Naive thymus-derived CD4-positive, alpha-beta T cell (primary cell): ENCODE measurements at regions of chr19 and their contacts with region 1.

Region 1: GRCh38 chr19:55632463-55632834 is 8.1 kb upstream of the ZNF784 start:
- DNase-seq: peak in 8 of 9 donors; percentile 81 to 93 (median 88)
- ATAC-seq: peak; percentile 76
- H3K4me3 ChIP-seq: no peak overlapping the region
- H3K4me3 Mint-ChIP-seq: peak overlapping the region; percentile 2 to 82 (median 34)
- H3K27ac ChIP-seq: peak overlapping the region; percentile 16
- H3K27ac Mint-ChIP-seq: peak overlapping the region; percentile 17 to 95 (median 71)
- H3K4me1 ChIP-seq: peaks cover 23 to 28% of the 10 kb centered on the region in 2 donors
- H3K4me1 Mint-ChIP-seq: peaks cover 39 to 54% (median 46%) of the 10 kb centered on the region in 7 donors
- H3K27me3 ChIP-seq: no peaks in the 10 kb centered on the region
- H3K27me3 Mint-ChIP-seq: peaks cover 0 to 12% (median 0%) of the 10 kb centered on the region in 5 donors

Region 2: DNA sequence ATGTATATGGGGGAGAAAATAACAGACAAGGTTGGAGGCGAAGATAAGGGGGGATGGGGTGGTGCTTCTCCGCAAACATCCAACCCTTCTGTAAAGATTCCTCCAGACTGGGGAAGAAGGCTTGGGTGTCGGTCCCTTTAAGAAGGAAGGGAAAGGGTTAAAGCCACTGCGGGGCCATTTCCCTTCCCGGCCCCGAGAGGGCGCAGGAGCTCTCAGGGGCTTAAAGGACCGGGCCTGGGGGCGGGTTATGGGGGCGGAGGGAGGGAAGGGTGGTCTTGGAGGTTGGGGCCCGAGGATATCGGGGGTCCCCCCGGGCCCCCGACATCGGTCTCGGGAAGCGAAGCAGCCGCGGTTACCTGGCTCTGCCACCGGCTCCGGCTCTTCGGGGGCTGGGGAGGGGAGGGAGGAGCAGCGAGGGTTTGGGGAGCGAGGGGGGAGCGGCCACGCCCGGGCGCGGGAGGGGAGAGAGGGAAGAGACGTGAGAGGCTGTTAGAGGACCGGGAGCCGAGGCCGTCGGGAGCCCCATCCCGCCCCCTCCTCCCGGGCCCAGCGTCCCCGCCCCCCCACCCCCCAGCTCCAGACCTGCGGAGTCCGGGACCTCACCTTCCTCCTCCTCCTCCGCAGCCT is 486.3 kb before region 1 on chr19:
- CTCF ChIA-PET with region 1: interaction called, 22 read pairs
- POLR2A ChIA-PET with region 1: no interaction called
- intact Hi-C with region 1: loop called in 1 of 2 experiments (anchors 1 kb)
- DNase-seq: no peak
- ATAC-seq: no peak
- H3K4me3 ChIP-seq: no peak overlapping the region
- H3K4me3 Mint-ChIP-seq: peak overlapping the region in 1 of 10 donors; percentile 28
- H3K27ac ChIP-seq: no peak overlapping the region
- H3K27ac Mint-ChIP-seq: no peak overlapping the region
- H3K4me1 ChIP-seq: no peaks in the 10 kb centered on the region
- H3K4me1 Mint-ChIP-seq: peaks cover under 1 to 14% (median 8%) of the 10 kb centered on the region in 7 donors
- H3K27me3 ChIP-seq: peaks cover 10 to 11% of the 10 kb centered on the region in 2 donors
- H3K27me3 Mint-ChIP-seq: peaks cover 49 to 65% (median 52%) of the 10 kb centered on the region in 5 donors

Region 3: GRCh38 chr19:55467236-55468053 is 165.0 kb before region 1 on chr19:
- CTCF ChIA-PET with region 1: interaction called, 10 read pairs
- POLR2A ChIA-PET with region 1: interaction called, 4 read pairs
- intact Hi-C with region 1: loop called in 1 of 2 experiments (anchors 1 kb)
- DNase-seq: peak in 7 of 9 donors; percentile 21 to 88 (median 54)
- ATAC-seq: peak; percentile 97
- H3K4me3 ChIP-seq: no peak overlapping the region
- H3K4me3 Mint-ChIP-seq: no peak overlapping the region
- H3K27ac ChIP-seq: no peak overlapping the region
- H3K27ac Mint-ChIP-seq: peak overlapping the region in 2 of 9 donors; percentile 25 to 59
- H3K4me1 ChIP-seq: no peaks in the 10 kb centered on the region
- H3K4me1 Mint-ChIP-seq: peaks cover under 1 to 9% (median 3%) of the 10 kb centered on the region in 7 donors
- H3K27me3 ChIP-seq: no peaks in the 10 kb centered on the region
- H3K27me3 Mint-ChIP-seq: peaks cover 0 to 3% (median 0%) of the 10 kb centered on the region in 5 donors

Region 4: GRCh38 chr19:55516878-55517620 is 115.4 kb before region 1 on chr19:
- CTCF ChIA-PET with region 1: interaction called, 74 read pairs
- POLR2A ChIA-PET with region 1: interaction called, 4 read pairs
- intact Hi-C with region 1: loop called (anchors 1 kb)
- DNase-seq: peak; percentile 77 to 94 (median 85)
- ATAC-seq: peak; percentile 100
- H3K4me3 ChIP-seq: peak overlapping the region; percentile 48
- H3K4me3 Mint-ChIP-seq: peak overlapping the region; percentile 74 to 89 (median 84)
- H3K27ac ChIP-seq: peak overlapping the region; percentile 66
- H3K27ac Mint-ChIP-seq: peak overlapping the region in 8 of 9 donors; percentile 55 to 96 (median 83)
- H3K4me1 ChIP-seq: peaks cover 3 to 4% of the 10 kb centered on the region in 2 donors
- H3K4me1 Mint-ChIP-seq: peaks cover 0 to 4% (median 4%) of the 10 kb centered on the region in 7 donors
- H3K27me3 ChIP-seq: no peaks in the 10 kb centered on the region
- H3K27me3 Mint-ChIP-seq: peaks cover 0 to 4% (median 3%) of the 10 kb centered on the region in 5 donors

Region 5: DNA sequence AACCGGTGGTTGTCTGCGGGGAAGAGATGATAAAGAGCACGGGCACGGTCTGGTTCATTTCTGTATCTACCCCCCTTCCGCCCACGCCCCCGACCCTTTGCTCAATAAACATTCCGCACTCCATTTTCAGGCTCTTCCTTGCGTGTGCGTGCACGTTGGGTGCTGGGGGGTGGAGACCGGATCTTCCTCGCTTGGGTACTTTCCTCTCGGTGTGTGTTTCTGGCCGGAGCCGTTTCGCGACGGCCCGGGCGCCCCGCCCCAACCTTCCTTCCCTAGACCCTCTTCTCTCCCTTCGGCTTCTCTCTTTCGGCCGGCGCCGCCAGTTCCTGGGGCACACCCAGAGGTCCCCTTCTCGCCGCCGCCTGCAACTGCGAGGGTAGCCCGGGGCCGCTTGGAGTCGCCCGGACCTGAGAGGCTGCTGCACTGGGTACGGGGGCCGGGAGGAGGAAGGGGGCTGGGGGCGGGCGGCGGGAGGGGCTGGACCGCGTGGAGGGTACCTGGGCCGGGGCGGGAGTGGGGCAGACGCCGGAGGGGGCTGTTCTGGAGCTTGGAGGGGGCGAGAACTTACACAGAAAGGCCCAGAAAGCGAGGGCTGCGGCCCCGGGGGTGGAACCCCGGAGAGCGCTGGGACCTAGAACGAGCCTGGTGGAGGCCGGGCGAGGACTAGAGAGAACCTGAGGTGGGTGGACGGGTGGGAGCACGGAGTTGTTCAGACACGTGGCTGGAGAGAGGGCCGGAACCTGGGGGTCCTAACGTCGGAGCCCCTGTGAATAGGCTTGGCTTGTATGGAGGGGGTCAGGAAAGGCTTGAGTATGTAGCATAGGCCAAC is 11.1 kb after region 1 on chr19 and contains the start of gene ZNF581:
- CTCF ChIA-PET with region 1: interaction called, 17 read pairs
- POLR2A ChIA-PET with region 1: interaction called, 154 read pairs
- intact Hi-C with region 1: loop called (anchors 1 kb)
- DNase-seq: peak; percentile 63 to 85 (median 81)
- ATAC-seq: peak; percentile 73
- H3K4me3 ChIP-seq: peak within 1 kb of the TSS; percentile 80
- H3K4me3 Mint-ChIP-seq: peak within 1 kb of the TSS; percentile 87 to 97 (median 94)
- H3K27ac ChIP-seq: peak within 1 kb of the TSS; percentile 80
- H3K27ac Mint-ChIP-seq: peak within 1 kb of the TSS; percentile 91 to 98 (median 96)
- H3K4me1 ChIP-seq: peaks cover 24 to 25% of the 10 kb centered on the region in 2 donors
- H3K4me1 Mint-ChIP-seq: peaks cover 23 to 63% (median 54%) of the 10 kb centered on the region in 7 donors
- H3K27me3 ChIP-seq: no peaks in the 10 kb centered on the region
- H3K27me3 Mint-ChIP-seq: no peaks in the 10 kb centered on the region
- total RNA-seq, gene ZNF581: 27.0 to 35.8 (median 32.1) TPM

Region 6: GRCh38 chr19:55777528-55777927 is 145.1 kb after region 1 on chr19:
- CTCF ChIA-PET with region 1: no interaction called
- POLR2A ChIA-PET with region 1: no interaction called
- intact Hi-C with region 1: no loop called
- DNase-seq: no peak
- ATAC-seq: no peak
- H3K4me3 ChIP-seq: no peak overlapping the region
- H3K4me3 Mint-ChIP-seq: no peak overlapping the region
- H3K27ac ChIP-seq: no peak overlapping the region
- H3K27ac Mint-ChIP-seq: no peak overlapping the region
- H3K4me1 ChIP-seq: no peaks in the 10 kb centered on the region
- H3K4me1 Mint-ChIP-seq: no peaks in the 10 kb centered on the region
- H3K27me3 ChIP-seq: peaks cover 0 to 3% of the 10 kb centered on the region in 2 donors
- H3K27me3 Mint-ChIP-seq: peaks cover 0 to 69% (median 54%) of the 10 kb centered on the region in 5 donors

Region 7: DNA sequence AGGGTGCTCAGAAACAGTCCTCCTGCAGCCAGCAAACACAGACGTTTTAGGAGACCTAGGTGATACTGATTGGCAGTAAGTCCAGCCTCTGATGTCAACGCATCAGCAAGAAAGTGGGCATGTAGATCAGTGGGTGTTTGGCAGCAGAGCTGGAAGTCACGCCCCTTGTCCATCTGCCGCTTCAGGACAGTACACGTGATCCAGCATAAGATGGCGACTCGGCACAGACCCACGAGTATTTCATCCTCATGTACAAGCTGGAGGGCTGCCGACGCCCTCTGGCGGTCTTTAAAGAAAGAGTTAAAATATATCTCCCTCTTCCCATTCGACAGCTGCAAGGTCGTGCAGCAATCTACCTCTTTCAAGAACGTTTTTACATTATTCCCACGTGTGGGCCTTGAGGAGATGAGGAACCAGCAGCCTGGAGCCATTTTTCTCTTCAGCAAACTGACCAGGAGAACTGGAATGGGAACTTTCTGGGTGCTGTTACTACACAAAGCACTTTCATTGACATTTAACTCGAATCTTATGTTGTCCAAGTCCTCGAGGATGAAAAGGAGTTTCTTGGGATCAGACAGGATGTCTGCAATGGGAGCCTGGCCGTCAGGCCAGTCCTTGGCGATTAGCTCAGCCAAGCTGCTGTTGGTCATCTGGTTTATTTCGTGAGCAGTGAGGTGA is 177.1 kb after region 1 on chr19:
- CTCF ChIA-PET with region 1: interaction called, 7 read pairs
- POLR2A ChIA-PET with region 1: no interaction called
- intact Hi-C with region 1: loop called in 1 of 2 experiments (anchors 5 kb)
- DNase-seq: peak in 6 of 9 donors; percentile 0 to 13 (median 8)
- ATAC-seq: peak; percentile 49
- H3K4me3 ChIP-seq: no peak overlapping the region
- H3K4me3 Mint-ChIP-seq: peak overlapping the region in 3 of 10 donors; percentile 4 to 30 (median 14)
- H3K27ac ChIP-seq: no peak overlapping the region
- H3K27ac Mint-ChIP-seq: no peak overlapping the region
- H3K4me1 ChIP-seq: no peaks in the 10 kb centered on the region
- H3K4me1 Mint-ChIP-seq: peaks cover 0 to 5% (median 0%) of the 10 kb centered on the region in 7 donors
- H3K27me3 ChIP-seq: no peaks in the 10 kb centered on the region
- H3K27me3 Mint-ChIP-seq: peaks cover 0 to 38% (median 16%) of the 10 kb centered on the region in 5 donors